Endothelial cell of umbilical vein (primary cell): ENCODE measurements at regions of chr6 and their contacts with region 1.

Region 1: GRCh38 chr6:5260661-5261544 is at the starts of genes FARS2 and LYRM4:
- DNase-seq: peak; percentile 94
- H3K4me3 ChIP-seq: peak within 1 kb of the TSS; percentile 94 to 98 (median 96)
- H3K27ac ChIP-seq: peak within 1 kb of the TSS; percentile 89
- H3K4me1 ChIP-seq: peaks cover 9% of the 10 kb centered on the region
- H3K27me3 ChIP-seq: no peaks in the 10 kb centered on the region
- CTCF ChIP-seq: peak in 1 of 2 donors; percentile 27
- POLR2A ChIP-seq: peak; percentile 32
- total RNA-seq, gene FARS2: 19.6 and 20.5 TPM in 2 replicates
- total RNA-seq, gene LYRM4: 39.5 and 39.7 TPM in 2 replicates

Region 2: DNA sequence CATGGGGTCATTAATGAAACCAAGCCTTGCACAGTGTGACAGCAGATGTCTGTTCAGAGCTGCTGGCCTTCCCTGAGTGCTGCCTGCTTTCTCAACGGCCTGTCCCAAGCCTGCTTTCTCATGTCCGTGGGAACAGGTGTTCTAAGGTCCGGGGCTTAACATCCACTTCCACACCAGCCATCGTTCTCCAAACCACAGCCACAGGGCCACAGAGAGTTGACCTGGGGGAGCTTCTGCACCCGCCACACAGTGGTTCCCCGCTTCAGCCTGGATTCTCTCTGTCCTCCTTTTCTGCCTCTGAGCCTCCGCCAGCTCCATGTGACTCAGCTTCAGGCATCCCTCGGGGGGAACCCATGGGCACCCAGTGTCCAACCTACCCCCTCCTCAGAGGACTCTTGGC is 202.6 kb before region 1 on chr6:
- CTCF ChIA-PET with region 1: no interaction called
- POLR2A ChIA-PET with region 1: no interaction called
- dilution Hi-C with region 1: no loop called
- intact Hi-C with region 1: loop called (anchors 5 kb)
- DNase-seq: no peak
- H3K4me3 ChIP-seq: no peak overlapping the region
- H3K27ac ChIP-seq: no peak overlapping the region
- H3K4me1 ChIP-seq: peaks cover 17% of the 10 kb centered on the region
- H3K27me3 ChIP-seq: no peaks in the 10 kb centered on the region
- CTCF ChIP-seq: no peak
- POLR2A ChIP-seq: no peak

Region 3: DNA sequence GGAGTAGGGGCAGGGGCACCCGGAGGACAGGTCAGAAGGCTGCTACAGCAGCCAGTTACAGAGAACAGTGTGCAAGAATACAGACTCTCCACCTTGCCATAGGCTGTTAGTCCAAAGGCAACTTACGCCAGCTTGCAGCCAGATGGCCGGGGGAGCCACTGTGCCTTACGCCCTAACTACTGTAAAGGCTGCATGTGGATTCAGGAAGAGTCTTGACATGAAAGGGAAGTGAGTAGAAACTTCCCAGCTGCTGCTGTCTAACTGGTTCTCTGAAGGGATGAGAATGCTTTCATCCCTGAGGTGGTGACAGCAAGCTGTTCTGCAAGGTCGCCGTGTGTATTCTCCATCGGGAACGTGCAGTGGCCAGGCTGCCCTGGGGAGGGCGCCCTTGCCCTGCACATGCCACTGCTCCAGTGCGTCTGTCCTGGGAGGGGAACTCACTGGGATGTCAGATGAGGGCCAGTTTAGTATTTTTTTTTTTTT is 46.3 kb before region 1 on chr6:
- CTCF ChIA-PET with region 1: no interaction called
- POLR2A ChIA-PET with region 1: no interaction called
- dilution Hi-C with region 1: no loop called
- intact Hi-C with region 1: loop called (anchors 2 kb)
- DNase-seq: peak; percentile 46
- H3K4me3 ChIP-seq: no peak overlapping the region
- H3K27ac ChIP-seq: no peak overlapping the region
- H3K4me1 ChIP-seq: peaks cover 5% of the 10 kb centered on the region
- H3K27me3 ChIP-seq: no peaks in the 10 kb centered on the region
- CTCF ChIP-seq: peak; percentile 75 to 76
- POLR2A ChIP-seq: no peak

Region 4: DNA sequence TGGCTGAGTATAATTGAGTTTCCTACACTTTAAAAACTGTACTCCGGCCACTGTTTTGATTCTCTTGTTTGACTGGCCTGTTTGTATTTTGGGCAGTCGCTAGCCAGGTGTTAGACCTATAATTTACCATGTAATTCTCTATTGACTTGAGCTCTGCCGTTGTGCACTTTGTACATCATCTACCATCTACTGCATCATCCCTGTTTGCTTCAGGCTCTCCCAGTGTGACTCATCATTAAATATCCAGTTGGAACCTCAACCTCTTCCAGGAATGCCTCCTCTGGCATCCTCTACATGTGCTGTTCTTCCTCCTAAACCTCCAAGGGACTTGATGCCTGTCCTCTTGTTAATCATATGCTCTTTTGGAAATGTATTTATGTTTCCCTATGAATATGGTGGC is 72.8 kb after region 1 on chr6:
- CTCF ChIA-PET with region 1: no interaction called
- POLR2A ChIA-PET with region 1: no interaction called
- dilution Hi-C with region 1: no loop called
- intact Hi-C with region 1: loop called (anchors 2 kb)
- DNase-seq: no peak
- H3K4me3 ChIP-seq: no peak overlapping the region
- H3K27ac ChIP-seq: peak overlapping the region; percentile 66
- H3K4me1 ChIP-seq: peaks cover 15% of the 10 kb centered on the region
- H3K27me3 ChIP-seq: no peaks in the 10 kb centered on the region
- CTCF ChIP-seq: no peak
- POLR2A ChIP-seq: no peak

Region 5: DNA sequence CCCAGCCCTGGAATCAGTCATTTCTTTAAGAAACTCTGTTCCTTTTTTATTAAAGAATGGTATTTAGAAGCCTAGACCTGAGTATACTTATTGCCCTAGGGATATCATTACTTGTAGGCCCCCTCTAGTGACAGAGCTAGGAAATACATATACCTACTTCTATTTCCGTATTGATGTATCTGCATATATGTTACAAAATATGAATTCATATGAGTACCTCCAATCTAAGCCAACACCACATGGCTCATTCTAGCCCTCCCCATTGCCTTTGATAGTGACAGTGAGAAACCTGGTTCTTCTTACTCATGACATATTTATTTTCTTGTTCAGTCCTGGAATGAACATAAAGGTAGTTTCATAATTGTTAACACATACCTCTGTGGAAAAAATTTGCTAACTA is 137.6 kb after region 1 on chr6:
- CTCF ChIA-PET with region 1: no interaction called
- POLR2A ChIA-PET with region 1: no interaction called
- dilution Hi-C with region 1: no loop called
- intact Hi-C with region 1: loop called (anchors 5 kb)
- DNase-seq: peak; percentile 62
- H3K4me3 ChIP-seq: no peak overlapping the region
- H3K27ac ChIP-seq: no peak overlapping the region
- H3K4me1 ChIP-seq: peaks cover 2% of the 10 kb centered on the region
- H3K27me3 ChIP-seq: no peaks in the 10 kb centered on the region
- CTCF ChIP-seq: peak; percentile 26 to 27
- POLR2A ChIP-seq: no peak

Region 6: GRCh38 chr6:5752391-5752680 is 491.4 kb after region 1 on chr6:
- CTCF ChIA-PET with region 1: no interaction called
- POLR2A ChIA-PET with region 1: no interaction called
- dilution Hi-C with region 1: no loop called
- intact Hi-C with region 1: no loop called
- DNase-seq: peak; percentile 7
- H3K4me3 ChIP-seq: no peak overlapping the region
- H3K27ac ChIP-seq: no peak overlapping the region
- H3K4me1 ChIP-seq: no peaks in the 10 kb centered on the region
- H3K27me3 ChIP-seq: no peaks in the 10 kb centered on the region
- CTCF ChIP-seq: no peak
- POLR2A ChIP-seq: no peak